ENCODE measurements at regions of chr4 and their contacts with region 1.

Region 1: GRCh38 chr4:48315728-48316630 is 25.4 kb upstream of the SLAIN2 start:
- DNase-seq: no peak
- ATAC-seq: peak in 1 of 4 donors; percentile 46
- H3K4me3 ChIP-seq: no peak overlapping the region
- H3K27ac ChIP-seq: no peak overlapping the region
- H3K4me1 ChIP-seq: no peaks in the 10 kb centered on the region
- H3K27me3 ChIP-seq: no peaks in the 10 kb centered on the region
- CTCF ChIP-seq: peak; percentile 33 to 70 (median 50)
- POLR2A ChIP-seq: no peak

Region 2: DNA sequence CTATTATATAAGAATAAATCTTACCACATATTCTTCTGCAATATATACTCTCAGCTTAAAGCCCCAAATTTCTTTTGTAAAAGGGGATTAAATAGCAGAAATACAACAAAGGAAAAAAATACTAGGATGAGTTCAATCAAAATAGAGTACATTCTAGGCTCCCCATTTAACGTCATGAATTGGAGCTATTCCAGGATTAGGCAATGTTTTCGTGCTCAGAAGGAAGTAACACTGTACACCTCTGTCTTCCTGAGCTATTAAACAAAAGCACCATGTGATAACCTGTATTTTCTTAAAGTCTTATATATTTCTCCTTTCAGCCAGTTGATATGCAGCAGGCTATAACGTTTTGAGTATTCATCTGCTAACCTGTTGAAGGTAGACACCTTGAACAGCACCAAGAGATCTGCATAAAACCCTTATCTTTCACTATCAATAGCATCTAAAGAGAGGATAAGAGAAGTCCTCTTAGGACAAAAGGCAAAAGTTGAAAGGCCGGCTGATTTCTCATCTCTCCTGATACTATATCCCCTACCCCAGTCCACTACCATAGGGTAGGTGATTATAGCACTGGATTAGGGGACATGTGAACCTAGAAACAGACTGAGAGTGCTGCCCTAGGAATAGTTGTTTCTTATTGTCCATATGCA is 77.9 kb before region 1 on chr4:
- intact Hi-C with region 1: no loop called
- DNase-seq: no peak
- ATAC-seq: peak in 2 of 4 donors; percentile 50 to 57
- H3K4me3 ChIP-seq: no peak overlapping the region
- H3K27ac ChIP-seq: no peak overlapping the region
- H3K4me1 ChIP-seq: peaks cover 0 to 8% (median 3%) of the 10 kb centered on the region in 12 donors
- H3K27me3 ChIP-seq: no peaks in the 10 kb centered on the region
- CTCF ChIP-seq: no peak
- POLR2A ChIP-seq: no peak

Region 3: DNA sequence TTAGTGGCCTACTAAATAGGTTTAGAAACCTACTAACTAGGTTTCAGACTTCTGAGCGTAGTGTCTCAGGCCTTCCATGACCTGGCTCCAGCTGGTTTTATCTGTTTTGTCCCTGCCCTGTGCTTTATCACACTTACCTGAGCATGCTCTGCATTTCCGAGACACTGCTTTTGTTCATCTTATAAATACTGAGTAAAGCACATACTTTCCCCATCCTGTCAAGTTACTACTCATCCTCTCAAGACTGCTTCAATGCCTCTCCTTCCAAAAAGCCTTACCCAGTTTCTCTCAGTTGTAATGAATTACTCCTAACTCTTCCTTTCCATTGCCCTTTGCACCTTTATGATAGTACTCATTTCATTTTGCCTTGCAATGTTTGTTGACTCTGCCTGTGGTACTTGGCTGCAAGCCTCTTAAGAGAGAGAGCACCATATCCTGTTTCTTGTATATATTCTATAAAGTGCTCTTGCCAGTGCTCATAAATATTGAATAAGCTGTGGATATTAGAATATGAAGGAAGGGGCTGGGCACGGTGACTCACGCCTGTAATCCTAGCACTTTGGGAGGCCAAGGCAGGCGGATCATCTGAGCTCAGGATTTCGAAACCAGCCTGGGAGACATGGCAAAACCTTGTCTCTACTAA is 59.8 kb after region 1 on chr4:
- intact Hi-C with region 1: no loop called
- DNase-seq: no peak
- ATAC-seq: no peak
- H3K4me3 ChIP-seq: no peak overlapping the region
- H3K27ac ChIP-seq: no peak overlapping the region
- H3K4me1 ChIP-seq: peaks cover 0 to 22% (median 4%) of the 10 kb centered on the region in 12 donors
- H3K27me3 ChIP-seq: no peaks in the 10 kb centered on the region
- CTCF ChIP-seq: no peak
- POLR2A ChIP-seq: no peak

Region 4: DNA sequence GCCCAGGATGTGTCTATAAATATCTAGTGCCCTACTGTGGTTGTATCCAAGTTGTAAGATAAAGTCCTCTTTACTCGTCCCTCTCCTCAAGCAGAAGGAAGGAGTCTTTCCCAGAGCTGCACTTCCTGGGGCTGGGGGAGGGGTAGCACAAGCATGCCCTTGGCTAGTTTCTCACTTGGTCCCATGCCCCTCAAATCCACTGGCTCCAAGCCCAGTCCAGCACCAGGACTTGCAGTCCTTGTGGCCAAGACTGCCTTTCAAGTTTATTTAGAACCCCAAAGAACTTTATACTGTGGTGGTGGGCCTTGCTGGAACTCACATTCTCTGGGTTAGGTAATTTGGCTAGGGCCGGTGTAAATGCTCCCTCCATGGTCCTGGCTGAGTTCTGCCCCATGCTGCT is 124.0 kb after region 1 on chr4:
- intact Hi-C with region 1: loop called in 1 of 10 experiments (anchors 10 kb)
- DNase-seq: peak in 2 of 5 donors; percentile 13 to 26
- ATAC-seq: peak in 1 of 4 donors; percentile 42
- H3K4me3 ChIP-seq: no peak overlapping the region
- H3K27ac ChIP-seq: no peak overlapping the region
- H3K4me1 ChIP-seq: peaks cover 0 to 10% (median 0%) of the 10 kb centered on the region in 12 donors
- H3K27me3 ChIP-seq: no peaks in the 10 kb centered on the region
- CTCF ChIP-seq: no peak
- POLR2A ChIP-seq: no peak